Activated B cell treated with CpG ODN at 0.5 μM for 24 hours (primary cell): ENCODE measurements at regions of chr11 and their contacts with region 1.

Region 1: GRCh38 chr11:16986434-16987215 is 27.6 kb downstream of the PLEKHA7 start:
- DNase-seq: no peak
- ATAC-seq: peak; percentile 93
- H3K4me3 Mint-ChIP-seq: peak overlapping the region; percentile 52
- H3K27ac Mint-ChIP-seq: peak overlapping the region; percentile 81
- H3K4me1 Mint-ChIP-seq: peaks cover 16% of the 10 kb centered on the region
- H3K27me3 Mint-ChIP-seq: no peaks in the 10 kb centered on the region
- CTCF ChIP-seq: no peak

Region 2: DNA sequence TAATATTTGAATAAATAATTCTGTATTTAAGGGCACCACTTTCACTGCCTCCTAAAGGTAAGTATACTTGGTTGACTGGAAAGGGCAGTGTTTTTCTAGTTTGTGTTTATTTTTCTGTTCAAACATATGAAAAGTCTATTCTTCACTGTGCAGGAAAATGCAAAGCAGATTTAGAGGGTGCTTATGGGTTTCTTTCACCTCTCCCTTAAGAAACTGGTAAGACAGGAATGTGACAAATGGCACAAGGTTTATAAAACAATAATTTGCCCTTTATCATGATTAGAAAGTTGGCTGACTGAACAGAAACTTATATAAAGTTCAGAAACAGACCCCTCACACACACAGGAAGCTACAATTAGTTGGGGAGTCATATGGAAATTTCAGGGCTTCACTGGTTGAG is 33.0 kb before region 1 on chr11:
- CTCF ChIA-PET with region 1: no interaction called
- POLR2A ChIA-PET with region 1: no interaction called
- intact Hi-C with region 1: loop called (anchors 5 kb)
- DNase-seq: no peak
- ATAC-seq: no peak
- H3K4me3 Mint-ChIP-seq: no peak overlapping the region
- H3K27ac Mint-ChIP-seq: no peak overlapping the region
- H3K4me1 Mint-ChIP-seq: no peaks in the 10 kb centered on the region
- H3K27me3 Mint-ChIP-seq: no peaks in the 10 kb centered on the region
- CTCF ChIP-seq: no peak

Region 3: GRCh38 chr11:17014838-17015626 is 28.4 kb after region 1 on chr11:
- CTCF ChIA-PET with region 1: no interaction called
- POLR2A ChIA-PET with region 1: no interaction called
- intact Hi-C with region 1: loop called (anchors 2 kb)
- DNase-seq: no peak
- ATAC-seq: peak; percentile 47
- H3K4me3 Mint-ChIP-seq: peak overlapping the region; percentile 89
- H3K27ac Mint-ChIP-seq: peak overlapping the region; percentile 27
- H3K4me1 Mint-ChIP-seq: peaks cover 8% of the 10 kb centered on the region
- H3K27me3 Mint-ChIP-seq: peaks cover 16% of the 10 kb centered on the region
- CTCF ChIP-seq: no peak

Region 4: GRCh38 chr11:17036666-17037542 is 50.3 kb after region 1 on chr11:
- CTCF ChIA-PET with region 1: no interaction called
- POLR2A ChIA-PET with region 1: no interaction called
- intact Hi-C with region 1: loop called (anchors 2 kb)
- DNase-seq: no peak
- ATAC-seq: no peak
- H3K4me3 Mint-ChIP-seq: no peak overlapping the region
- H3K27ac Mint-ChIP-seq: no peak overlapping the region
- H3K4me1 Mint-ChIP-seq: no peaks in the 10 kb centered on the region
- H3K27me3 Mint-ChIP-seq: peaks cover 5% of the 10 kb centered on the region
- CTCF ChIP-seq: no peak